Right ventricle myocardium inferior (tissue), 1 donor: ENCODE measurements at regions of chr19 and their contacts with region 1.

Region 1: GRCh38 chr19:34428549-34429285 is 536 bp downstream of the UBA2 start:
- DNase-seq: no peak
- ATAC-seq: peak; percentile 75

Region 2: GRCh38 chr19:34459623-34460022 is 30.9 kb after region 1 on chr19:
- intact Hi-C with region 1: loop called (anchors 2 kb)
- DNase-seq: no peak
- ATAC-seq: no peak

Region 3: GRCh38 chr19:34480971-34481821 is 52.5 kb after region 1 on chr19 and contains the start of gene WTIP:
- intact Hi-C with region 1: loop called (anchors 5 kb)
- DNase-seq: peak; percentile 84
- ATAC-seq: peak; percentile 83
- total RNA-seq, gene WTIP: 21.8 TPM

Region 4: DNA sequence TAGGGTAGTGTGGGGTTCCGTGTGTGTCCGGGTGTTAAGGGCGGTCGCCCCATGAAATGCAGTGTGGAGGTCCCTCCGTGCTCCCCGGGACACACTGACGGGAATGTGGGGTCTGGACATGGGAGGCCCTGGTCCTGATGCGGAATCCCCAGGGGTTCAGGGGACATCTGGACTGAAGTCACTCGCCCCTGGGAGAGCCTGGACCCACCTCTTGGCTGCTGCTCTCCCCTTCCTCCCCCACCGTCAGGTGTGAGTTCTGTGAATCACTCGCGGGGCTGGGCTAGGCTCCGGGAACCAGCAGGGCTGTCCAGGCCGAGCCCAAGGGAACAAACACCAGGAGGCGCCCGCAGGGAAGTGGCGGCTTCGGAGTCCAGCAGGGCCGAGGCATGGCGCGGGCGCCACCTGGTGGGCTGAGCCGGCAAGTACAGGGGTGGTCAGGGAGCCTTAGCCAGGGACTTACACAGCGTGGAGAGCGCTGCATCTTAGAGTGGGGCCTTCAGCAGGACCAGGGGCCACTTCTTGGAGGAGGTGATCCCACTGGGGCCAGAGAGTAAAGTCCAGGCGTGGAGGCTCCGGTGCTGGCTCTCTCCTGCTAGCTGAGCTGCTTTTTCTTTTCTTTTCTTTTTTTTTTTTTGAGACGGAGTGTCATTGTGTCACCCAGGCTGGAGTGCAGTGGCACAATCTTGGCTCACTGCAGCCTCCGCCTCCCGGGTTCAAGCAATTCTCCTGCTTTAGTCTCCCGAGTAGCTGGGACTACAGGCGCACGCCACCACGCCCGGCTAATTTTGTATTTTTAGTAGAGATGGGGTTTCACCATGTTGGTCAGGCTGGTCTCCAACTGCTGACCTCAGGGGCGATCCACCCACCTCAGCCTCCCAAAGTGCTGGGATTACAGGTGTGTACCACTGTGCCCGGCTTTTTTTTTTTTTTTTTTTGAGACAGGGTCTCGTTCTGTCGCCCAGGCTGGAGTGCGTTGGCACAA is 72.9 kb after region 1 on chr19:
- intact Hi-C with region 1: loop called (anchors 2 kb)
- DNase-seq: peak; percentile 94
- ATAC-seq: peak; percentile 90